ENCODE measurements at regions of chr3 and their contacts with region 1.

Region 1: GRCh38 chr3:70550723-70551319 is 238.4 kb upstream of the MDFIC2 start:
- DNase-seq: peak; percentile 84
- H3K4me3 Mint-ChIP-seq: no peak overlapping the region
- H3K27ac Mint-ChIP-seq: no peak overlapping the region
- H3K4me1 Mint-ChIP-seq: no peaks in the 10 kb centered on the region
- H3K27me3 Mint-ChIP-seq: peaks cover 3% of the 10 kb centered on the region

Region 2: DNA sequence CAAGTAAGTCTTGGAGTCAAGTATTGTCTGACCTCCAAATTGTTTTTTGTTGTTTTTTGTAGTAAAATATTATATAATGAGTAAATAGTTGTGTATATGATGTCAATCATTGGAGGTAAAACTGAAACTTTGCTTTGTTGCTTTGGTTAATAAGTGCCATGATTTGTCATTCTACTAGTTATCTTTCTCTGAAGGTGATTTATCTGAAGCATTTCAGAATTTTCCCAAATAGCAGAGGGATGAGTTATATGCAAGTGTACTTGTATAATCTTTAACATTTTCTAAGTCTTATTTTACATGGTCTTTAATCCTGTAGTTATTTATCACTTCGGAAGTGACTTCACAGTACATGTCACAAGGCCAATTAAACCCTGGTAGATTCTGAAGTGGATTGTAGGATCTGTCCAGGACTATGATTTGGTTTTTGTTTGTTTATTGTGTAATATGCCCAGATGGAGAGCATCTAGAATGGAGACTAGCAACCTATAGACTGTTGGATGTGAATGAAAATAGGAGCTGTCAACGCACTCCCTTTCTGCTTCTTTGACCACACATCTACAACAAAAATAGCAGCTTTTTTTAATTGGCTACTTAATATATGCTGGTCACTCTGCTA is 644.4 kb before region 1 on chr3:
- CTCF ChIA-PET with region 1: no interaction called
- POLR2A ChIA-PET with region 1: no interaction called
- intact Hi-C with region 1: no loop called
- DNase-seq: no peak
- H3K4me3 Mint-ChIP-seq: no peak overlapping the region
- H3K27ac Mint-ChIP-seq: no peak overlapping the region
- H3K4me1 Mint-ChIP-seq: no peaks in the 10 kb centered on the region
- H3K27me3 Mint-ChIP-seq: no peaks in the 10 kb centered on the region

Region 3: DNA sequence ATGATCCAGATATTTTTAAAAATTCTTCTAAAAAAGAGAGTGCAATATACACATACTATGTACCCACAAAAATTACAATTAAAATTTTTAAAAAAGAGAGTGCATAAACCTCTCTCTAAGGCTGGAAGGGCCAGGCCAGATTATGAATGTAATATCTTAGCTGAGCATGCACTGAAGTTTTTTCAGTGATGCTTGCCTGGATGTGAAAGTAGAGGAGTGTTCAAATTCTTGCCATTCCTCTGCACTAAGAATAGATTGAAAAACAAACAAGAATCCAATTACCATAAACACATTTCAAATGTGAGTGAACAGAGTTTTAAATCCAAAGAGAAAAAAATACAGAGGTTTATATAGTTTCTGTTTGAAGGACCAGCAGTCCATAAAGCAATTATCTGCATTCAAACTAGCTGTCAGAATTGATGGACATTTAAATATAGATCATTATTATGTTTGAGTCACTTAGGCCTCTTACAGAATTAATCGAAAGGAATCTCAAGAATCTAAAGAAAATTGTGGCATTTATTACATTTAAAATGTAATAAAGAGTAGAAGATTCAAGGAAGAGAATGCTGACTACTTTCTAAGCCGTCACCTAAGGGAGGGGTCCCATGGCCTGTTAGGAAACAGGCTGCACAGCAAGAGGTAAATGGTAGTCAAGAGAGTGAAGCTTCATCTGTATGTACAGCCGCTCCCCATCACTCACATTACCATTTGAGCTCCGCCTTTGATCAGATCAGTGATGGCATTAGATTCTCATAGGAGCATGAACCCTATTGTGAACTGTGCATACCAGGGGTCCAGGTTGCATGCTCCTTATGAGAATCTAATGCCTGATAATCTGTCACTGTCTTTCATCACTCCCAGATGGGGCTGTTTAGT is 79.1 kb before region 1 on chr3:
- CTCF ChIA-PET with region 1: no interaction called
- POLR2A ChIA-PET with region 1: no interaction called
- intact Hi-C with region 1: no loop called
- DNase-seq: no peak
- H3K4me3 Mint-ChIP-seq: no peak overlapping the region
- H3K27ac Mint-ChIP-seq: no peak overlapping the region
- H3K4me1 Mint-ChIP-seq: no peaks in the 10 kb centered on the region
- H3K27me3 Mint-ChIP-seq: peaks cover 1% of the 10 kb centered on the region

Region 4: GRCh38 chr3:70516076-70516475 is 34.7 kb before region 1 on chr3:
- CTCF ChIA-PET with region 1: no interaction called
- POLR2A ChIA-PET with region 1: no interaction called
- intact Hi-C with region 1: no loop called
- DNase-seq: no peak
- H3K4me3 Mint-ChIP-seq: no peak overlapping the region
- H3K27ac Mint-ChIP-seq: no peak overlapping the region
- H3K4me1 Mint-ChIP-seq: no peaks in the 10 kb centered on the region
- H3K27me3 Mint-ChIP-seq: peaks cover 20% of the 10 kb centered on the region

Region 5: DNA sequence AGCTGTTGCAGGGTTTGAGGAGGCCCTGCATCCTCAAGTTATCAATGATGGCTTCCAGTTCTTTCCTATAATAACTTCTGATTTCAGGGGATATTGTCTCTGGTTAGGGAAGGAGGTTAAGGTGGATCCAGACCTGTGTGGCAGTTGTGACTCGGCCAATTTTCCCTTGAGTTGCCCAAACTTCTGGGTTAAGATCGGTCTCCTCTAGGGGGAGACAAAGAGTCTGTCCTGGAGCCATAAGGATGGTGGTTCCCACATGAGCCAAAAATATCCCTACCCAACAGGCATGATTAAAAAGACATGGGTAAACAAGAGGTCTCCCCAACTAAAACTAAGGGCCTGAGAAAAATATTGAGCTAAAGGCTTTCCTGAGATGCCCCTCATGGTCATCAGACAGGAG is 10.9 kb before region 1 on chr3:
- CTCF ChIA-PET with region 1: interaction called, 17 read pairs
- POLR2A ChIA-PET with region 1: no interaction called
- intact Hi-C with region 1: no loop called
- DNase-seq: no peak
- H3K4me3 Mint-ChIP-seq: no peak overlapping the region
- H3K27ac Mint-ChIP-seq: no peak overlapping the region
- H3K4me1 Mint-ChIP-seq: no peaks in the 10 kb centered on the region
- H3K27me3 Mint-ChIP-seq: peaks cover 16% of the 10 kb centered on the region

Region 6: DNA sequence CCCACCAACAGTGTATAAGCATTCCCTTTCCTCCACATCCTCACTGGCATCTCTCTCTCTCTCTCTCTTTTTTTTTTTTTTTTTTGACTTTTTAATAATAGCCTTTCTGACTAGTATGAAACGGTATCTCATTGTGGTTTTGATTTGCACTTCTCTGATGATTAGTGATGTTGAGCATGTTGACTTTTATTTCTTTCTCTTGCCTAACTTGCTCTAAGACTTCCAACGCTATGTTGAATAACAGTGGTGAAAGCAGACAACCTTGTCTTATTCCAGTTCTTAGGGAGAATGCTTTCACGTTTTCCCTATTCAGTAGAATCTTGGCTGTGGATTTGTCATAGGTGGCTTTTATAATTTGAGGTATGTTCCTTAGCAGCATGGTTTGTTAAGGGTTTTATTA is 11.0 kb after region 1 on chr3:
- CTCF ChIA-PET with region 1: interaction called, 10 read pairs
- POLR2A ChIA-PET with region 1: no interaction called
- intact Hi-C with region 1: no loop called
- DNase-seq: no peak
- H3K4me3 Mint-ChIP-seq: no peak overlapping the region
- H3K27ac Mint-ChIP-seq: no peak overlapping the region
- H3K4me1 Mint-ChIP-seq: no peaks in the 10 kb centered on the region
- H3K27me3 Mint-ChIP-seq: peaks cover 2% of the 10 kb centered on the region

Region 7: GRCh38 chr3:70824773-70825172 is 274.0 kb after region 1 on chr3:
- CTCF ChIA-PET with region 1: no interaction called
- POLR2A ChIA-PET with region 1: no interaction called
- intact Hi-C with region 1: no loop called
- DNase-seq: no peak
- H3K4me3 Mint-ChIP-seq: no peak overlapping the region
- H3K27ac Mint-ChIP-seq: no peak overlapping the region
- H3K4me1 Mint-ChIP-seq: no peaks in the 10 kb centered on the region
- H3K27me3 Mint-ChIP-seq: peaks cover 4% of the 10 kb centered on the region

Region 8: GRCh38 chr3:71069797-71070196 is 519.0 kb after region 1 on chr3:
- CTCF ChIA-PET with region 1: interaction called, 15 read pairs
- POLR2A ChIA-PET with region 1: no interaction called
- intact Hi-C with region 1: loop called (anchors 1 kb)
- DNase-seq: peak; percentile 84
- H3K4me3 Mint-ChIP-seq: no peak overlapping the region
- H3K27ac Mint-ChIP-seq: peak overlapping the region; percentile 62
- H3K4me1 Mint-ChIP-seq: peaks cover 74% of the 10 kb centered on the region
- H3K27me3 Mint-ChIP-seq: no peaks in the 10 kb centered on the region

Region 9: DNA sequence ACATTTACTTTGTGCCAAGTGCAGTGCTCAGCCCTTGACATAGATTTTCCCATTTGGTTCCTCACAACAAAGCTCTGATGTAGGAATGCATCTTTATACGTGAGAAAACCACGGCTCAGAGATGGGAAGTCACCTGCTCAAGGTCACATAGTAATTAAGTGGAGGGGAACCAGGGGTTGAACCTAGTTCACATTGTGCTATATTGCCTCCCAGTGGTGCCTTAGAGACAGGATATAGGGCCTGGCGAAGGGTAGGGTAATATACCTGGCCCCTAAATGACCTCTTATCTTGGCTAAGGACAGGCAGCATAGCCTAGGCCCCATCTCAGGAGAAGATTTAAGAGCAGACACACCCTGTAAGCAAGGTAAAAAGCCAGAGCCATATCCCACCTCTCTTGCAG is 961.2 kb after region 1 on chr3:
- CTCF ChIA-PET with region 1: no interaction called
- POLR2A ChIA-PET with region 1: no interaction called
- intact Hi-C with region 1: loop called (anchors 10 kb)
- DNase-seq: peak; percentile 46
- H3K4me3 Mint-ChIP-seq: no peak overlapping the region
- H3K27ac Mint-ChIP-seq: no peak overlapping the region
- H3K4me1 Mint-ChIP-seq: peaks cover 6% of the 10 kb centered on the region
- H3K27me3 Mint-ChIP-seq: no peaks in the 10 kb centered on the region

Region 10: DNA sequence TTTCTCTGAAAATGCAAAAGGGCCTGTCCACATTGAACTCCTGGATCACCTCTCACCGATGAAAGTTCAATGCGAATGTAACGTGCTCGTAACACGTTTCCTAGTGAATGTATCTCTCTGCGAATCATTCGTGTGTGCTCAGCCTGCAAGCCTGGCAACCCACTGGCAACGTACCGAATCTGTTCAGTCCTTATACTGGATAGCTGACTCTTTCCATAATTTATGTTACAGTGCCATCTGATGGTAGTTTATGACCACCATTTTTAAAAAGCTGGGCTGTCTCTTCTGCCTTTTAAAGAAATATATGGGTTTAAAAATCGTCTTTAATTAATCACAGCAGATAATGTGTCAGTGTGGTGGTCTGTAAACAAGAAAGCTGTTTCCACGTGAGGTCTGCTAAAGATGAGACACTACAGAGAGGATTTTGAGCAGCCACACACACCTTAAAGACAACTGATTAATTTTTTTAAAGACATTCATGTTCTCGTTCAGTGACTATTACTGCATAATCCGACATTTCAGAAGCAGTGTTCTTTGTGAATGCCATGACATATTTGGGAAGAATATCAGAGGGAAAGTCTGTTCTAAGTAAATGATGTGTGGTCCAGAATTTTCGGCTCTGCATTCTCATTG is 1102.1 kb after region 1 on chr3:
- CTCF ChIA-PET with region 1: interaction called, 6 read pairs
- POLR2A ChIA-PET with region 1: no interaction called
- intact Hi-C with region 1: loop called (anchors 1 kb)
- DNase-seq: peak; percentile 50
- H3K4me3 Mint-ChIP-seq: peak overlapping the region; percentile 16
- H3K27ac Mint-ChIP-seq: no peak overlapping the region
- H3K4me1 Mint-ChIP-seq: peaks cover 6% of the 10 kb centered on the region
- H3K27me3 Mint-ChIP-seq: no peaks in the 10 kb centered on the region